Left cardiac atrium (tissue), 4 donors: ENCODE measurements at regions of chr10 and their contacts with region 1.

Region 1: DNA sequence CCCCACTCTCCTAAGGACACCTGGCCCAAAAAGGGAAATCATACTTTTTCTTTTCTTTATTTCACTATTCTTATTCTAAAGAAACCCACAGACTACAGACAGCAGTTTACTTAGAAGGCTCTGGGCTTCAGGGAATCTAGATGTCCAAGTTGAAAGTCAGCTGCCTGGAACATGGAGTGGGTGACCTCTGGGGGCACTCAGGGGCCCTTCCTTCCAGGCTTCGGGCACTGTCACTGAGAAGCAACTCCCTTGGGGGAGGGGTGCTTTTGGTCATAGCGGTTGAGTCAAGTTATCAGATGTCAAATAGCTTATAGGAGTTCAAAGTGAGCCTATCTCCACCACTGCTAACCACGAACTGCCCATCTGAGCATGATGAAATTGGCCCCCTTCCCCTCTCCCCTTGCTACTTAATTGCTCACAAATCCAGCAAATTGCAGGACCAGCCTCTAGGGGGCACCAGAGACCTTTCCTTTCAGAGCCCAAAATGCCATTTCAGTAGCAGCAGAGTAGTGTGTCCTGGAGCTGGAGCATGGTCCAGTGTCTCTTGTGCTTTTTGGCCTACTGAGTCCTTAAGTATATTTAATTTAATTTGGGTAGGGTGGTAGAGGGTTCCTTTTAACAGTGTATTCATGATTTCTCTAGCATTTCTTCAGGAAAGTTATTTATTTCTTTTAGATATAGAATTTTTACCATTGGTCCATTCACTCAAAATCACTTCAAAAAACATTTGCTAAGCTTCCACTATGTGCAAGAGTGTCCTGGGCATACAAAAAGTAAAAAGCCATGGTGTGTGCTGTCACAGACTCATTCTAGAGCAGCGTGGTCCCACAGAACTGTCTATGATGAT is 463.8 kb downstream of the KCNMA1 start:
- DNase-seq: peak; percentile 68
- ATAC-seq: peak; percentile 75 to 77

Region 2: DNA sequence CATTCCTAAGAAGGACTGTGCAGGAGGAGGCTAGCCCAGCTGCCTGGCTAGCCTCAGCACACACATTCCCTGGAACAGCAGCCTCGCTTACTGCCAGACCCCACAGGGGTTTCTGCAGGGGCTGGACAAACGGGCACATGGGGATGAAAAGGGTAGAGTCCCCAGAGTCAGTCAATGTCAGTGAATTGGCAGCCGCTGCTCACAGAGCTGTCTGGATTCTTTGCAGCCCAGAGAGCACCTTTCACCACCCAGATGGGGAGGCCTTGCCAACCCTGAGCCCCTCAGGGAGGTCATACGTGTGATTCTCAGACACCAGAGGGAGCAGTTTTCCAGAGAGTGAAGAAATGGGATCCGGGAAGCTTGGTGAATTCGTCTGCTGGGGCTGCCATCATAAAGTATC is 320.5 kb after region 1 on chr10:
- intact Hi-C with region 1: loop called in 1 of 2 experiments (anchors 10 kb)
- DNase-seq: no peak
- ATAC-seq: peak in 1 of 2 donors; percentile 65

Region 3: DNA sequence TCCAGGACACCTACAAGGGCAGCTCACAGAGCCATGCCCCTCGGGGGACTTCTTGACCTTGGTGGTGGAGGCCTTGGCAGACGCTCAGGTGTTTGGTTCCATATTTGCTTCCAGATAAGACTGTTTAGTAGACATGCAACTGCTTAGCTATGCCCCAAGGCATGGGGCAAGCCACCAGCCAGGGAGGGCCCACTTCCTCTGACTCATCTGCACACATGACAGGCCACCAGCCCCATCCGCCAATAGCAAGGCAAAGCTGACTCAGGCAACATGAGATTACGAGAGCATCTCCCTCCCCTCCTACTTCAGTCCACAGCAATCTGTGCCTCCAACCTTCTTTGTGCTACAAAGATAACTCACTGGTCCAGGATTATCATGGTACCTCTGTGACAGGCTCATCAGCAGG is 408.9 kb after region 1 on chr10:
- intact Hi-C with region 1: no loop called
- DNase-seq: no peak
- ATAC-seq: peak in 1 of 2 donors; percentile 38

Region 4: DNA sequence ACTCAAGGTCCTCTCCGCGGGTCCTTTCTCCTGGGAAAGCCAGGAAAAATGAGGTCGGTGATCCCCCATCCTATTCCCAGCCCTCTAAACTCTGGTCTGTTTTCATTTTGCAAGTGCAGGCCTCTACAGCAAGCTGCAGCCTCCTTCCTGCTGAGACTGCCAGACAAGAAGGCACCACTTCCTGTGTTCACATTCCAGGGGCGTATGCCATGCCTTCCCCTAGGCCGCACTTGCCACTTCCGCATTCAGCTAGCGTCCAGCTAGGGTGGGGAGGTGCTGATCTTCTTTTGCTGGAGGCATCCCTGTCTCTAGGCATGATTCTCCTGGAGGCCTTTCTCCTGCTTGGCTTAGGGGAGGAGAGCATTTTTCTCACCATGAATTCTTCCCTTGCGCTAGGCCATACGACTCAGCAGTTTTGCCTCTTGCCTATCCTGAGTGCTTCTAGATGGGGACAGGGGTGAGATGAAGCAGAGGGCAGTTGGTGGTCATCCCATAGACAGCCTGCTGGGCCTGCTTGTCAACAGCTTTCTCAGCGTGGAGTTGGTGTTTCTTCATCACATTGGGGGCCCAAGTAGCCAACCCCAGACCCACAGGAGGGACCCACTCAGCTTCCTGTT is 1188.7 kb after region 1 on chr10:
- intact Hi-C with region 1: no loop called
- DNase-seq: peak; percentile 50
- ATAC-seq: peak; percentile 18 to 49